Gastrocnemius medialis (tissue), 4 donors: ENCODE measurements at regions of chr6 and their contacts with region 1.

Region 1: DNA sequence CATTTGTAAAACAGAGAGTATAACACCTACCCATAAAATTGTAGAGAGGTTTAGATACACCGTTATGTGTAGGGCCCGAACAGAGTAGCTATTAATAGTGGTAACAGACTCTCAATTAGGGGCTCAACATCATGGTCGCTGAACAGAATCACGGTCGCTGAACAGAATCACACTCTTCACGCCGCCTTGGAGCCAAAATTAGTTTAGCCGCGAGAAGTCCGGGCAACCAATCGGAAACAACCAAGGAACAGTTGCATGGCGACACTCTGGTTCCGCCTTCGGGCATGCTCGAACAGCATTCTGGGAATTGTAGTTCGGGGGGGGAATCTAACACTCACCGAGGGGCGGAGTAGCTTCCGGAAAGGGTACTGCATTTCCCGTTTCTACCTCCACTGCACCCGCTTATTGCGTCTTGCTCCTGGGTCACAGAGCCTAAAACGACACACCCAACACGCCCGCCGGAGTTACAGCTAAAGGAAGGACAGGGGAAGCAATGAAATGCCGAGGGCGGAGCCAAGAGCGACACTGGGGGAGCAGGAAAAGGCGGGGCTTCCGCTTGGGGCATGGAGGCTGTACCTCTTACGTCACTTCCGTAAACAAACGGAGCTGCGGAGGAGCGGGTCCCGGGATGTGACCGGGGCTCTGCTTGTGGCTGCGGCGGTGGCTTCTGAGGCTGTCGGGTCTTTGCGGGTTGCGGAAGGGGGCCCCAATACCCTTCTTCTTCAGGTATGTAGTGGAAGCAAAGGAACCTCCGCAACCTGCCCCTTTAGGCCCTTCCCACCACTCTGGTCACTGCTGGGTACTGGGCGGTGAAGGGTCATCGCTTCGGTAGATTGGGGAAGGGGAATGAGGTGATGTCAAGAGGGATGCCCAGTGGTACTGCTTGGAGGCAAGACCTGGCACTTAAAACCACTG is at the start of gene CCDC28A:
- DNase-seq: peak; percentile 90 to 94
- ATAC-seq: peak; percentile 99
- H3K4me3 ChIP-seq: peak within 1 kb of the TSS; percentile 68 to 99 (median 80)
- H3K27ac ChIP-seq: peak within 1 kb of the TSS; percentile 93 to 99 (median 96)
- H3K4me1 ChIP-seq: peaks cover 19 to 24% of the 10 kb centered on the region in 2 donors
- H3K27me3 ChIP-seq: no peaks in the 10 kb centered on the region
- CTCF ChIP-seq: peak in 1 of 5 experiments; percentile 19
- POLR2A ChIP-seq: peak; percentile 42 to 67
- total RNA-seq, gene CCDC28A: 4.6 to 8.4 (median 5.6) TPM

Region 2: GRCh38 chr6:138109042-138109997 is 664.1 kb before region 1 on chr6:
- in situ Hi-C with region 1: loop called in 3 of 4 experiments (anchors 10 to 25 kb)
- intact Hi-C with region 1: loop called (anchors 5 kb)
- DNase-seq: peak in 1 of 2 donors; percentile 40
- ATAC-seq: no peak
- H3K4me3 ChIP-seq: no peak overlapping the region
- H3K27ac ChIP-seq: no peak overlapping the region
- H3K4me1 ChIP-seq: peaks cover 0 to 3% of the 10 kb centered on the region in 2 donors
- H3K27me3 ChIP-seq: peaks cover 18 to 38% (median 27%) of the 10 kb centered on the region in 3 donors
- CTCF ChIP-seq: peak; percentile 76 to 97 (median 85)
- POLR2A ChIP-seq: no peak

Region 3: GRCh38 chr6:138403801-138404661 is 369.4 kb before region 1 on chr6 and contains the start of gene HEBP2:
- in situ Hi-C with region 1: loop called in 1 of 4 experiments (anchors 25 kb)
- intact Hi-C with region 1: loop called (anchors 10 kb)
- DNase-seq: peak; percentile 95 to 96
- ATAC-seq: peak; percentile 89 to 93
- H3K4me3 ChIP-seq: peak within 1 kb of the TSS; percentile 65 to 92 (median 84)
- H3K27ac ChIP-seq: peak within 1 kb of the TSS; percentile 92 to 97 (median 94)
- H3K4me1 ChIP-seq: peaks cover 8 to 9% of the 10 kb centered on the region in 2 donors
- H3K27me3 ChIP-seq: no peaks in the 10 kb centered on the region
- CTCF ChIP-seq: peak in 4 of 5 experiments; percentile 39 to 79 (median 78)
- POLR2A ChIP-seq: peak; percentile 81 to 91
- total RNA-seq, gene HEBP2: 60.3 to 81.5 (median 74.8) TPM

Region 4: GRCh38 chr6:138410972-138411667 is 362.3 kb before region 1 on chr6:
- in situ Hi-C with region 1: loop called in 2 of 4 experiments (anchors 10 to 25 kb)
- intact Hi-C with region 1: loop called (anchors 10 kb)
- DNase-seq: no peak
- ATAC-seq: no peak
- H3K4me3 ChIP-seq: no peak overlapping the region
- H3K27ac ChIP-seq: peak overlapping the region in 1 of 4 donors; percentile 42
- H3K4me1 ChIP-seq: no peaks in the 10 kb centered on the region
- H3K27me3 ChIP-seq: no peaks in the 10 kb centered on the region
- CTCF ChIP-seq: no peak
- POLR2A ChIP-seq: no peak

Region 5: DNA sequence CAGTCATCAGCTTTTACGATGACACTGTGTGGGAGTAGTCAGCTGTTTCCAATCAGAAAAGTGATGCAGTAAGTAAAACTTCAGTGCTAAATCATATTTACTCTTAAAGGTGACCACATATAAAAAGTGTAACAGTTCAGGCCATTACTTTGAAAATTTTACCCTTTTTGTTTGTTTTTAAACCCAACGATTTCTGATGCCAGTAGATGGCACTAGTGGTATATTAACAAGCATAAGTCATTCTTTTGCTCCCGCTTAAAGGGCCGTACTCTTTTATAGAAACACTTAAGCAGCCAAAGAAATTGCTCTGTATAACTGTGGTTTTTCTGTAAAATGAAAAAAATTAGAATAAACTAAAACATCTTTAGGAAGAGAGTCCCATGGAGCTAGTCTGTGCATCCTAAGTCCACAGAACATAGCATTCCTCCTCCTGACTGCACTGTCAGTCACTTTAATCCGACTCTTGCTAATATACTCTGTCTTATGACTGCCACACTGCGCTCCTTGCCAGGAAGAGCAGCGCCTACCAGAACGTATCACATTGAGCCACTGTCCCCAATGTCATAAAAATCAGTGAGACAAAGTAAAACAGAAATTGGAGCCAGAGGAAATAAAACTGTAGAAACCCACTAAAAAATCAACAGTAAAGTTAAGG is 344.4 kb before region 1 on chr6:
- in situ Hi-C with region 1: loop called in 3 of 4 experiments (anchors 10 to 25 kb)
- intact Hi-C with region 1: no loop called
- DNase-seq: no peak
- ATAC-seq: no peak
- H3K4me3 ChIP-seq: no peak overlapping the region
- H3K27ac ChIP-seq: no peak overlapping the region
- H3K4me1 ChIP-seq: peaks cover 0 to 5% of the 10 kb centered on the region in 2 donors
- H3K27me3 ChIP-seq: no peaks in the 10 kb centered on the region
- CTCF ChIP-seq: peak in 4 of 5 experiments; percentile 26 to 51 (median 38)
- POLR2A ChIP-seq: no peak

Region 6: GRCh38 chr6:138692058-138692977 is 81.1 kb before region 1 on chr6:
- in situ Hi-C with region 1: loop called in 2 of 4 experiments (anchors 5 to 10 kb)
- intact Hi-C with region 1: loop called (anchors 2 kb)
- DNase-seq: peak; percentile 16 to 41
- ATAC-seq: peak; percentile 84 to 86
- H3K4me3 ChIP-seq: peak overlapping the region; percentile 60 to 67 (median 64)
- H3K27ac ChIP-seq: peak overlapping the region in 3 of 4 donors; percentile 16 to 35 (median 30)
- H3K4me1 ChIP-seq: peaks cover 0 to 3% of the 10 kb centered on the region in 2 donors
- H3K27me3 ChIP-seq: no peaks in the 10 kb centered on the region
- CTCF ChIP-seq: peak; percentile 46 to 88 (median 70)
- POLR2A ChIP-seq: no peak

Region 7: DNA sequence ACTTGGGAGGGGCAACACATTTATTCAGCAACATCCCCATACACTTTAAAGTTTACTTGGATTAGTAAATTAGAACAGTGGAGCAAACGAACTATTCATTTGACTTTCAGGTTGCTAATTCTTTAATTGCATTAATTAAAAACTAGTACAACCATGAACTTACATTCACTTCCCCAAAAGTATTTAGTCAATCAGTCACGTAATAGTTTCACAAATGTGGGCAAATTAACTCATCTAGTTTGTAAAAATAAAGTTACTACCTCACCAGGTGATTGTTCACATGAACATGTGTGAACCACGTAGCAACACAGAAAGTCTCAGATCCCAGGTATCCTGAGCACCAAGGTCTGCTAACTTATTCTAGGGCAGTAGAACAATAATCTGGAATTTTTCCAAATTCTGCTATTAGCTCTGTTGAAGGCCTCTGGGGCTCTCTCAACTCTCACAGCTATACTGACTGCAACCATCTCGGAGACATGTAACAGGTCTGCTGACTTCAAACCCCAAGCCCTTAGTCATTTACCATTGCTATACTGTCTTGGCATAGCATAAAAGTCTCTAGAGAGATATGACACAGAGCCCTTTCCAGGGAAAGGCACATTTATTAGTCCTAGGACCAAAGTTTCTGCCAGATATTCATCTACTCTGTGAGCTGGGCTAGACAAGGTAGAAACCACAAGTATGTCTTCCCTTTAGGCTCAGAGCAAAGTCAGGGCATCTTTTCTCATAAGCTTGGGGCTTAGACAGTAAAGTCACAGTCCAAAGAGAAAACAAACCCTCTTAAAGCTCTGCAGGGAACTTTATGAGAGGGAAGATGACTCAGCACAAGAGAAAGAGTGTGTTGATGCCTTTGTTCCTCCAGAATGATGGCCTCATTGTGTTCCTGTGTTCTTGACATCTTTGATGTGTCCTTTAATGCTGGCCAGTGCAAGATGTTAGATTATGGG is 50.7 kb before region 1 on chr6:
- in situ Hi-C with region 1: no loop called
- intact Hi-C with region 1: no loop called
- DNase-seq: no peak
- ATAC-seq: no peak
- H3K4me3 ChIP-seq: no peak overlapping the region
- H3K27ac ChIP-seq: no peak overlapping the region
- H3K4me1 ChIP-seq: peaks cover 0 to 4% of the 10 kb centered on the region in 2 donors
- H3K27me3 ChIP-seq: no peaks in the 10 kb centered on the region
- CTCF ChIP-seq: no peak
- POLR2A ChIP-seq: no peak

Region 8: GRCh38 chr6:138987640-138988468 is 214.4 kb after region 1 on chr6 and contains the start of gene REPS1:
- in situ Hi-C with region 1: no loop called
- intact Hi-C with region 1: loop called (anchors 1 kb)
- DNase-seq: peak; percentile 80 to 87
- ATAC-seq: peak; percentile 93 to 94
- H3K4me3 ChIP-seq: peak within 1 kb of the TSS; percentile 85 to 96 (median 94)
- H3K27ac ChIP-seq: peak within 1 kb of the TSS; percentile 86 to 90 (median 88)
- H3K4me1 ChIP-seq: peaks cover 24 to 35% of the 10 kb centered on the region in 2 donors
- H3K27me3 ChIP-seq: no peaks in the 10 kb centered on the region
- CTCF ChIP-seq: peak; percentile 86 to 99 (median 98)
- POLR2A ChIP-seq: peak; percentile 60 to 70
- total RNA-seq, gene REPS1: 14.8 to 21.6 (median 17.4) TPM